Activated CD4-positive, alpha-beta memory T cell treated with anti-CD3 and anti-CD28 coated beads, Interleukin-2, amount 10 ng/mL, durations not matched to agents 7 days and 5 days (primary cell): ENCODE measurements at regions of chr9 and their contacts with region 1.

Region 1: GRCh38 chr9:114681594-114682332 is at the start of gene TEX48:
- DNase-seq: peak; percentile 89
- H3K4me3 Mint-ChIP-seq: peak within 1 kb of the TSS; percentile 55
- H3K27ac Mint-ChIP-seq: peak within 1 kb of the TSS; percentile 84
- H3K4me1 Mint-ChIP-seq: peaks cover 57% of the 10 kb centered on the region
- H3K27me3 Mint-ChIP-seq: peaks cover 13% of the 10 kb centered on the region
- total RNA-seq, gene TEX48: 0.48 to 1.5 TPM

Region 2: GRCh38 chr9:114405294-114406034 is 276.3 kb before region 1 on chr9:
- CTCF ChIA-PET with region 1: interaction called, 23 read pairs
- POLR2A ChIA-PET with region 1: no interaction called
- DNase-seq: peak; percentile 84
- H3K4me3 Mint-ChIP-seq: no peak overlapping the region
- H3K27ac Mint-ChIP-seq: no peak overlapping the region
- H3K4me1 Mint-ChIP-seq: peaks cover 16% of the 10 kb centered on the region
- H3K27me3 Mint-ChIP-seq: no peaks in the 10 kb centered on the region

Region 3: GRCh38 chr9:114505187-114506081 is 176.3 kb before region 1 on chr9 and contains the start of gene WHRN:
- CTCF ChIA-PET with region 1: no interaction called
- POLR2A ChIA-PET with region 1: no interaction called
- DNase-seq: peak; percentile 89
- H3K4me3 Mint-ChIP-seq: peak within 1 kb of the TSS; percentile 73
- H3K27ac Mint-ChIP-seq: no peak within 1 kb of the TSS
- H3K4me1 Mint-ChIP-seq: peaks cover 31% of the 10 kb centered on the region
- H3K27me3 Mint-ChIP-seq: peaks cover 60% of the 10 kb centered on the region
- total RNA-seq, gene WHRN: 4.5 to 4.8 TPM

Region 4: DNA sequence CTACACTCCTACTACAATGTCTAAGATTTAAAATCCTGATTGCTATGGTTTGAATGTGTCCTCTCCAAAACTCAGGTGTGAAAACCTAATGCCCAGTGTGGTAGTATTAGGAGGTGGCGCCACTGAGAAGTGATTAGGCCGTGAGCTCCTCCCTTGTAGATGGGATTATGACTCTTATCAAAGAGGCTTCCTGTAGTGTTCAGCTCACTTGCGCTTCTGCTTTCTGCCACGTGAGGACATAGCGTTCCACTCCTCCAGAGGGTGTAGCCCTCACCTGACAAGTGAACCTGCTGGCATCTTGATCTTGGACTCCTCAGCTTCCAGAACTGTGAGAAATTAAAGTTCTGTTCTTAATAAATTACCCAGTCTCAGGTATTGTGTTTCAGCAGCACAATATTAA is 143.5 kb before region 1 on chr9:
- CTCF ChIA-PET with region 1: no interaction called
- POLR2A ChIA-PET with region 1: no interaction called
- DNase-seq: peak; percentile 26
- H3K4me3 Mint-ChIP-seq: no peak overlapping the region
- H3K27ac Mint-ChIP-seq: no peak overlapping the region
- H3K4me1 Mint-ChIP-seq: no peaks in the 10 kb centered on the region
- H3K27me3 Mint-ChIP-seq: peaks cover 24% of the 10 kb centered on the region

Region 5: GRCh38 chr9:114629563-114630090 is 52.1 kb before region 1 on chr9:
- CTCF ChIA-PET with region 1: no interaction called
- POLR2A ChIA-PET with region 1: no interaction called
- DNase-seq: no peak
- H3K4me3 Mint-ChIP-seq: no peak overlapping the region
- H3K27ac Mint-ChIP-seq: no peak overlapping the region
- H3K4me1 Mint-ChIP-seq: no peaks in the 10 kb centered on the region
- H3K27me3 Mint-ChIP-seq: no peaks in the 10 kb centered on the region

Region 6: GRCh38 chr9:114641967-114642366 is 39.8 kb before region 1 on chr9:
- CTCF ChIA-PET with region 1: no interaction called
- POLR2A ChIA-PET with region 1: no interaction called
- DNase-seq: no peak
- H3K4me3 Mint-ChIP-seq: no peak overlapping the region
- H3K27ac Mint-ChIP-seq: no peak overlapping the region
- H3K4me1 Mint-ChIP-seq: no peaks in the 10 kb centered on the region
- H3K27me3 Mint-ChIP-seq: no peaks in the 10 kb centered on the region

Region 7: GRCh38 chr9:114696814-114697544 is 15.2 kb after region 1 on chr9:
- CTCF ChIA-PET with region 1: interaction called, 56 read pairs
- POLR2A ChIA-PET with region 1: interaction called, 51 read pairs
- DNase-seq: peak; percentile 85
- H3K4me3 Mint-ChIP-seq: peak overlapping the region; percentile 39
- H3K27ac Mint-ChIP-seq: peak overlapping the region; percentile 97
- H3K4me1 Mint-ChIP-seq: peaks cover 79% of the 10 kb centered on the region
- H3K27me3 Mint-ChIP-seq: peaks cover 34% of the 10 kb centered on the region

Region 8: DNA sequence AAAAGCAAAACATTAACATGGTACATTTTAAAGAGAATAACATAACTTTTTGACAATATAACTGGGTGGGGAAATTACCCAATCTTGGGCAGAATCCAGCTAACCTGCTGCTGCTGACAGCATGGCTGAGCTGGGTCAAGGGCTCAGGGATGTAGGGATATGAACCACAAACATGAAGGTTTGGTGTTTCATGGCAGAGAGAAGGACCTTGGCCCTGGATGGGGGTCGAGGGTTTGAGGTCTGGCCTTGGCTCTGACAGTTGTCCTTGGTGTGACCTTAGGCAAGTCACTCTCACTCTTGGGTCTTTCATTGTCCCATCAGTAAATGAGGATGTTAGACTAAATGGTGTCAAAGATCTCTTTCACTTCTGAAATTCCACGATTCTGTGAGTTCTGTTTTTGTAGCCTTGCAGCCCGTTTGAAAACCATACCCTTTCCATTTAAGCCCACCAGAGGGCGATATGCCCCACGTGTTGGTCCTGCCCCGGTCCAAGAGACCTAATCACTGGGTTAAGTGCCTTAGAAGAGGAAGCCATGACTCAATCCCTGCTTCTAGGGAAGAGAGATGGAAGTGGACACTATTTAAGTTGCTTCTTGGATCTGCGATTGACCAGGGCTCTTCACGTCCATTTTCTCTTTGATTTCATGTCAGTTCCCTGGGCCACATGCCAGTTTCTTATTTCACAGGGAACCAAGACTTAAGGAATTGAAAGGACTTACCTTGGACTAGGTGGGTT is 57.0 kb after region 1 on chr9:
- CTCF ChIA-PET with region 1: interaction called, 144 read pairs
- POLR2A ChIA-PET with region 1: interaction called, 21 read pairs
- DNase-seq: peak; percentile 80
- H3K4me3 Mint-ChIP-seq: no peak overlapping the region
- H3K27ac Mint-ChIP-seq: peak overlapping the region; percentile 64
- H3K4me1 Mint-ChIP-seq: peaks cover 59% of the 10 kb centered on the region
- H3K27me3 Mint-ChIP-seq: peaks cover 11% of the 10 kb centered on the region

Region 9: GRCh38 chr9:114906908-114907571 is 225.3 kb after region 1 on chr9:
- CTCF ChIA-PET with region 1: interaction called, 147 read pairs
- POLR2A ChIA-PET with region 1: interaction called, 18 read pairs
- DNase-seq: peak; percentile 38
- H3K4me3 Mint-ChIP-seq: peak overlapping the region; percentile 59
- H3K27ac Mint-ChIP-seq: peak overlapping the region; percentile 92
- H3K4me1 Mint-ChIP-seq: peaks cover 68% of the 10 kb centered on the region
- H3K27me3 Mint-ChIP-seq: no peaks in the 10 kb centered on the region

Region 10: GRCh38 chr9:114919611-114920010 is 237.8 kb after region 1 on chr9:
- CTCF ChIA-PET with region 1: interaction called, 17 read pairs
- POLR2A ChIA-PET with region 1: interaction called, 4 read pairs
- DNase-seq: no peak
- H3K4me3 Mint-ChIP-seq: no peak overlapping the region
- H3K27ac Mint-ChIP-seq: no peak overlapping the region
- H3K4me1 Mint-ChIP-seq: peaks cover 78% of the 10 kb centered on the region
- H3K27me3 Mint-ChIP-seq: no peaks in the 10 kb centered on the region